ENCODE measurements at regions of chr4 and their contacts with region 1.

Region 1: GRCh38 chr4:46844325-46844917 is 64.6 kb downstream of the COX7B2 start:
- DNase-seq: no peak
- ATAC-seq: peak in 1 of 2 donors; percentile 28
- H3K4me3 ChIP-seq: no peak overlapping the region
- H3K27ac ChIP-seq: no peak overlapping the region
- H3K4me1 ChIP-seq: no peaks in the 10 kb centered on the region
- H3K27me3 ChIP-seq: no peaks in the 10 kb centered on the region

Region 2: GRCh38 chr4:46975812-46976553 is 131.6 kb after region 1 on chr4:
- intact Hi-C with region 1: no loop called
- DNase-seq: no peak
- ATAC-seq: no peak
- H3K4me3 ChIP-seq: no peak overlapping the region
- H3K27ac ChIP-seq: no peak overlapping the region
- H3K4me1 ChIP-seq: no peaks in the 10 kb centered on the region
- H3K27me3 ChIP-seq: no peaks in the 10 kb centered on the region

Region 3: GRCh38 chr4:47032415-47033106 is 188.1 kb after region 1 on chr4:
- intact Hi-C with region 1: loop called in 2 of 4 experiments (anchors 10 kb)
- DNase-seq: peak; percentile 64 to 86 (median 83)
- ATAC-seq: peak; percentile 96 to 98
- H3K4me3 ChIP-seq: peak overlapping the region; percentile 29
- H3K27ac ChIP-seq: no peak overlapping the region
- H3K4me1 ChIP-seq: no peaks in the 10 kb centered on the region
- H3K27me3 ChIP-seq: no peaks in the 10 kb centered on the region

Region 4: DNA sequence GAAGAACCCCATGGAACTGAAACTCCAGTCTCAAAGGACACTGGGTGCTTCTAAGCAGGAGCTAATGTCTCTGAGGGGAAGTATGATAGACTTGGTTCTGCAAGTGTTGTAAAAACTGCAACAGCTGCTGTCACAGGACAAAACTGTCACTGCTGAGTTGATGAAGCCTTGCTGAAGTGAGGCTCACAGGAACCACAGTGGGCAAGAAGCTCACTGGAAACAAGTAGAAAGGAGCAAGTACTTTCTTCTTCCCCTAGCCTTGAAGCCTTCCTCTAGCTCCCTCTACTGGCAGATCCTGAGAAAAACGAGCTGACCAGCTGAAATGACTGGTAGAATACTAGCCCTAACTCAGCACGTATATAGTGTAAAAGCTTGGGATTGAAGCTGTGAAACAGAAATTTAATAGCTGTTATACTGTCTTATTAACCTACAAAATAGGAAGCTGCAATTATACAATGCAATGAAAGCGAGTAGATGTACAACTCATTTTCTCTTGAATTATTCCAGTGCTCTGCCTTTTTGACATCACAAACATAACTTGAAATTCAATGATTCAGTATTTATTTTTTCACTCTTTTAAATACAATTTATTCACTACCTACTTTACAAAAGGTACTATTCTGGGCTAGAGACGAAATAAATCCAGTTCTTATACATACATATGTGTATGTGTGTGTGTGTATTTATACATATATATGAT is 278.3 kb after region 1 on chr4:
- intact Hi-C with region 1: loop called in 1 of 4 experiments (anchors 5 kb)
- DNase-seq: peak; percentile 15 to 24 (median 23)
- ATAC-seq: peak; percentile 71 to 73
- H3K4me3 ChIP-seq: no peak overlapping the region
- H3K27ac ChIP-seq: no peak overlapping the region
- H3K4me1 ChIP-seq: no peaks in the 10 kb centered on the region
- H3K27me3 ChIP-seq: no peaks in the 10 kb centered on the region

Region 5: GRCh38 chr4:47383829-47384427 is 539.5 kb after region 1 on chr4:
- intact Hi-C with region 1: loop called in 3 of 4 experiments (anchors 5 to 10 kb)
- DNase-seq: no peak
- ATAC-seq: no peak
- H3K4me3 ChIP-seq: no peak overlapping the region
- H3K27ac ChIP-seq: no peak overlapping the region
- H3K4me1 ChIP-seq: no peaks in the 10 kb centered on the region
- H3K27me3 ChIP-seq: no peaks in the 10 kb centered on the region